H1 (cell line): ENCODE measurements at regions of chr2 and their contacts with region 1.

Region 1: DNA sequence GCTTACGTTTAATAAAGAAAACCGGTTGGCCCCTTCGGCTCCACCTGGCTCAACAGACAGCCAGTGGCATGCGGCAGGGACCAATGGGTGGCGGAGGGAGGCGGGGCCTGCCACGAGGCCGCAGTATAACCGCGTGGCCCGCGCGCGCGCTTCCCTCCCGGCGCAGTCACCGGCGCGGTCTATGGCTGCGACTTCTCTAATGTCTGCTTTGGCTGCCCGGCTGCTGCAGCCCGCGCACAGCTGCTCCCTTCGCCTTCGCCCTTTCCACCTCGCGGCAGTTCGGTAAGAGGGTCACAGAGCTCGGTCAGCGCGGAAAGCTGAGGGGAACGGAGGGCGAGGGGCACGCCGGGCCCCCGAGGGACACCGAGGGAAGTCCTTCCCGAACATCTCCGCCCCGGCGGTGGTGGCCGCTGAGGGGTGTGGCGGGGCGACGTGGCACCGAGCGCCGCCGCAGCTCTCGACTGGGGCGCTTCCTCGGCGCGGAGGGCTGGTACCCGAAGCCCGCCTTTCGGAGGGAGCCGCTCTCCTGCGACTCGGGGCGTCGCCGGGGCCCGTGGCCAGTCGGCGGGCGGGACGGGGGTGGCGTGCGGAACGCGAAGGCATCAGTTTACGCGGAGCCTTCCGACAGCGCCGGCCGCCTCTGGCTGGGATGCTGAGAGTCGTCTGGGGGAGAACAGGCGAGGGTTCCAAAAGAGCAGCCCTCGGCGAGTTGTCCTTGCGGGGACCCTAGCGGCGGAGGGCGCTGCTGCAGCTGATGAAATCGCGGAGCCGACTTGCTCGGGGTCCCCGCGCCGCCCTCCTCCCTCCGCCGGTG is at the start of gene MTHFD2:
- DNase-seq: peak; percentile 94 to 95
- H3K4me3 ChIP-seq: peak within 1 kb of the TSS; percentile 85 to 98 (median 89)
- H3K27ac ChIP-seq: peak within 1 kb of the TSS; percentile 97
- H3K4me1 ChIP-seq: peaks cover 0 to 8% (median 3%) of the 10 kb centered on the region in 4 experiments; a peak in 2 of 7 replicates
- H3K27me3 ChIP-seq: no peaks in the 10 kb centered on the region
- CTCF ChIP-seq: peak; percentile 56 to 81 (median 76)
- EP300 ChIP-seq: peak in 1 of 2 experiments; percentile 66; a peak in 1 of 3 replicates
- POLR2A ChIP-seq: peak; percentile 98
- RAD21 ChIP-seq: peak; percentile 26 to 45
- total RNA-seq, gene MTHFD2: 260 and 291 TPM in 2 replicates

Region 2: GRCh38 chr2:74261204-74261864 is 62.7 kb after region 1 on chr2:
- CTCF ChIA-PET with region 1: interaction called, 6 read pairs
- POLR2A ChIA-PET with region 1: interaction called, 12 read pairs
- DNase-seq: peak; percentile 34 to 84
- H3K4me3 ChIP-seq: no peak overlapping the region
- H3K27ac ChIP-seq: no peak overlapping the region
- H3K4me1 ChIP-seq: peaks cover 0 to 4% (median 1%) of the 10 kb centered on the region in 4 experiments; a peak in 2 of 7 replicates
- H3K27me3 ChIP-seq: no peaks in the 10 kb centered on the region
- CTCF ChIP-seq: peak; percentile 61 to 86 (median 64)
- EP300 ChIP-seq: no peak
- POLR2A ChIP-seq: no peak
- RAD21 ChIP-seq: peak; percentile 88 to 90